Dorsolateral prefrontal cortex (tissue), 120 donors: ENCODE measurements at regions of chr6 and their contacts with region 1.

Region 1: DNA sequence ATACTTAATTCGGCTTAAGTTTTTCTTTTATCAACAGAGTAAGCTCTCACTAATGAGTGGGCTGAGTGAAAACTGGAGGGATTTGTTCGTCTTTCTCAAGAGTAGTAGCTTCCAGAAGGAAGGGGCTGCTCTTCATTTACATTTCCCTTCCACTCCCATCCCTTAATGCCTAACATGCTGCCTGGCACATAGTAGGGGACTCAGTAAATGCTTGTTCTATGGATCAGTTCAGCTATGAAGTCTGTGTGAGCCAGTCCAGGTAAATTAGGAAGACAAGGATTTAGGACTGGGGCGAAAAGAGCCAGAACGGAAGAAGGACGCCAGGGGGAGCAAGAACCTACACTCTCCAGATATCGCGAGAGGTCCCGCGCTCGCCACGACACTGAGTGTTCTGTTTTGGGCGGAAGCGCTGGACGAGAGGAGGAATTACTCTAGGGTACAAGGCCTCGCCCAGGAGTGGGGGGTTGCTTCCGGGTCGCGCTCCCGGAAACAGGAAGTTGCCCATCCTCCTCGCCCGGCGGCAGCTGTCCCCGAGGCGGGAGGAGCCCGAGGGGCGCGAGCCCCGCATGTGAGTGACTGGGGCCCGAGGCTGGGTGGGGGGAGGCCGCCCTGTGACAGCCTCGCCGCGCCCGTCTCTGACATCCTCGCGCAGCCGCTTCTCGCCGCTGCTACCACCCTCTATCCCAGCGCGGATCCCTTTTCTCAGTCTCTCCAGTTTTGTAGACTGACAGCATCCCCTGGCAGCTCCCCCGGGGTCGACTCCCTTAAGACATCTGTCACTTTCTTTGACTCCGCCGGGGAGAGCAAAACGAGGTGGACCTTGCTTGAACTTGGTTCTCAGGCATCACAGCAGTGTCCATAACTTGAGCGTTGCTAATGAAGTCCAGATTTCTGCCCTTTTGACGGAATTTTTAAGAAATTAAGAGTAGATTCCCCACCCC is at the start of gene C6orf89:
- DNase-seq: peak; percentile 97 to 99 (median 98)
- H3K4me3 ChIP-seq: peak within 1 kb of the TSS; percentile 64 to 97 (median 85)
- H3K27ac ChIP-seq: peak within 1 kb of the TSS; percentile 53 to 99 (median 94)
- H3K27me3 ChIP-seq: no peaks in the 10 kb centered on the region
- CTCF ChIP-seq: peak; percentile 82 to 98 (median 95)
- total RNA-seq, gene C6orf89: 52.9 to 88.0 (median 72.2) TPM

Region 2: GRCh38 chr6:36735110-36736071 is 150.3 kb before region 1 on chr6:
- intact Hi-C with region 1: no loop called
- DNase-seq: peak in 3 of 10 donors; percentile 48 to 73 (median 55)
- H3K4me3 ChIP-seq: peak overlapping the region in 45 of 59 donors; percentile 1 to 48 (median 31)
- H3K27ac ChIP-seq: peak overlapping the region in 24 of 59 donors; percentile 2 to 83 (median 52)
- H3K27me3 ChIP-seq: no peaks in the 10 kb centered on the region
- CTCF ChIP-seq: no peak

Region 3: DNA sequence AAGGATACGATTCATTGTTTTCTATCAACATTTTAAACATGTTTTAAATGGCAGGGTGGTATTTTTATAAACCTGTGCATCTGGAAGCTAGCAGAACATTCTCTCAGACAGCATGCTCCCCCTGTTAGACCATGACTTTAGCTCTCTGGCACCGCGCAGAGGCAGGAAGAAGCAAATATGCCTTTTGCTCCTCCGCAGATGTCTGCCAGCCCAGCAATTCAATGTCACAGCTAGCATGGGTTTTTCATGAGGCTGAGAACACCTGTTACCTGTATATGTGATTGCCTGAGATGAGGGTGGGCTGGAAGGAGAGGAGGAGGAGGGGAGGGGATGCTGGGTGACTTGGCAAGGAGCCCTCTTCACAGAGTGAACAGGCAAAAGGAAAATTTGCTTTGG is 93.6 kb after region 1 on chr6:
- intact Hi-C with region 1: loop called in 1 of 2 experiments (anchors 2 kb)
- DNase-seq: peak; percentile 49 to 84 (median 79)
- H3K4me3 ChIP-seq: no peak overlapping the region
- H3K27ac ChIP-seq: peak overlapping the region in 58 of 59 donors; percentile 23 to 100 (median 84)
- H3K27me3 ChIP-seq: no peaks in the 10 kb centered on the region
- CTCF ChIP-seq: peak; percentile 28 to 85 (median 72)

Region 4: GRCh38 chr6:36985808-36986703 is 100.3 kb after region 1 on chr6 and contains the start of gene MTCH1:
- intact Hi-C with region 1: loop called in 1 of 2 experiments (anchors 1 kb)
- DNase-seq: peak; percentile 77 to 94 (median 90)
- H3K4me3 ChIP-seq: peak within 1 kb of the TSS; percentile 58 to 100 (median 99)
- H3K27ac ChIP-seq: peak within 1 kb of the TSS; percentile 88 to 100 (median 99)
- H3K27me3 ChIP-seq: no peaks in the 10 kb centered on the region
- CTCF ChIP-seq: peak in 26 of 56 donors; percentile 1 to 57 (median 20)
- total RNA-seq, gene MTCH1: 246 to 500 (median 376) TPM

Region 5: GRCh38 chr6:37169496-37170272 is 284.0 kb after region 1 on chr6 and contains the start of gene PIM1:
- intact Hi-C with region 1: loop called (anchors 5 to 10 kb)
- DNase-seq: peak; percentile 96 to 100 (median 99)
- H3K4me3 ChIP-seq: peak within 1 kb of the TSS; percentile 68 to 98 (median 90)
- H3K27ac ChIP-seq: peak within 1 kb of the TSS; percentile 55 to 98 (median 92)
- H3K27me3 ChIP-seq: no peaks in the 10 kb centered on the region
- CTCF ChIP-seq: peak in 10 of 56 donors; percentile 2 to 42 (median 16)
- total RNA-seq, gene PIM1: 8.8 to 61.4 (median 18.1) TPM

Region 6: GRCh38 chr6:37207903-37208456 is 322.2 kb after region 1 on chr6:
- intact Hi-C with region 1: loop called in 1 of 2 experiments (anchors 2 kb)
- DNase-seq: peak; percentile 46 to 86 (median 78)
- H3K4me3 ChIP-seq: no peak overlapping the region
- H3K27ac ChIP-seq: no peak overlapping the region
- H3K27me3 ChIP-seq: no peaks in the 10 kb centered on the region
- CTCF ChIP-seq: peak; percentile 19 to 75 (median 62)

Region 7: DNA sequence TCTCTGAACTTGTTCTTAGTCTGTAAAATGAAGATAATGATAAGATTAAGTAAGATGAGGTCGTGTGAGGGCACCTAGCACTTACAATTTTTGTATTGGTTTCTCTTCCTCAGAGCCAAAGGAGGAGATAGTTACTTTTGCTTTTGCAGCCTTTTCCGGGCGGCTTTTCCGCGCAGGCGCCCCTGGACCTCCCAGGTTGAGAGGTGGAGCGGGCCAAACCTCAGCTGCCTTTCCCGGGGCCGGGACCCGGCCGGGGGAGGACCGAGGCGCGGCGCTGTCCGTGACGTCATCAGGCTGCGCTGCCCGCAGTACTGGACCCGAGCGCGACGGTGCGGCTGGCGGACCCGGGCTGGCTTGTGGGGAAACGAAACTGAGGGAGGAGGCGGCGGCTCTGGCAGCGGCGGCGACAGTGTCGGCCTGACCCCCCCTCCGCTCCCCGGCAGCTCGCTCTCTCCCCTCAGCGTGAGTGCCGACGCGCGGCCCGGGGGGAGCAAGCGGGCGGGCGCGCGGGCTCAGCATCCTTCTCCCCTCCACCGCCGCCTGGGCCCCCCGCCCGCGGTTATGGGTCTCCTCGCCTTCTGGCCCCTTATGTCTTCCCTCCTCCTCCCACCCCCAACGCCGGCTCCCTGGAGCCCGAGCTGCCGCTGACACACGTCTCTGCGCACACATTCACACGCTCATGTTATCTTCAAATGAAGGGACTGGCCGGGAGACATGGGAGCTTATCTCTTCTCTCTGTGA is 547.4 kb after region 1 on chr6 and contains the start of gene CMTR1:
- intact Hi-C with region 1: loop called in 1 of 2 experiments (anchors 10 kb)
- DNase-seq: peak; percentile 85 to 95 (median 92)
- H3K4me3 ChIP-seq: peak within 1 kb of the TSS; percentile 60 to 98 (median 92)
- H3K27ac ChIP-seq: peak within 1 kb of the TSS; percentile 37 to 97 (median 90)
- H3K27me3 ChIP-seq: peaks cover 0 to 2% (median 0%) of the 10 kb centered on the region in 45 donors
- CTCF ChIP-seq: peak in 37 of 56 donors; percentile 11 to 57 (median 38)
- total RNA-seq, gene CMTR1: 39.1 to 69.9 (median 54.8) TPM